ENCODE measurements at regions of chr4 and their contacts with region 1.

Region 1: GRCh38 chr4:89482248-89482647 is 174.6 kb upstream of the GPRIN3 start:
- DNase-seq: peak; percentile 88
- H3K4me3 ChIP-seq: no peak overlapping the region
- H3K27ac ChIP-seq: no peak overlapping the region
- H3K4me1 ChIP-seq: peaks cover 12% of the 10 kb centered on the region
- H3K27me3 ChIP-seq: no peaks in the 10 kb centered on the region
- CTCF ChIP-seq: peak; percentile 39 to 41
- POLR2A ChIP-seq: no peak

Region 2: DNA sequence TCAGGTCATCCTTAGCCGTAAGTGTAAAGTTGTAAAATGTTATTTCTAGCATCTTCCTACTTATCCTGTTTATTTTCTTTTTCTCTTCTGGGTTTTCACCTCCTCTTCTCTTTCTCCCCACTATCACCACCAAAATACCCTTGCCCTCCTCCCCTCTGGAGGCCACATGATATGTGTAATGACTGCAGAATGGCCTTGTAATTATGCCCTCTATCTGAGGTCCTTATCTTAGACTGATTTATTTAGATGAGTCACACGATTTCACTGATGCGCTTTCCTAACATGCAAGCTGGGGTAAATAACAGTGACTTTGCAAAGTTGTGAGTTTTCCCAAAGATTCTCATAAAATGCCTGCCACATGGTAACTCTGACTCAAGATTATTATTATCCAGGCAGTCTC is 57.1 kb after region 1 on chr4:
- CTCF ChIA-PET with region 1: interaction called, 11 read pairs
- POLR2A ChIA-PET with region 1: no interaction called
- dilution Hi-C with region 1: no loop called
- intact Hi-C with region 1: no loop called
- DNase-seq: peak; percentile 90
- H3K4me3 ChIP-seq: no peak overlapping the region
- H3K27ac ChIP-seq: peak overlapping the region; percentile 94
- H3K4me1 ChIP-seq: peaks cover 61% of the 10 kb centered on the region
- H3K27me3 ChIP-seq: no peaks in the 10 kb centered on the region
- CTCF ChIP-seq: no peak
- POLR2A ChIP-seq: no peak

Region 3: DNA sequence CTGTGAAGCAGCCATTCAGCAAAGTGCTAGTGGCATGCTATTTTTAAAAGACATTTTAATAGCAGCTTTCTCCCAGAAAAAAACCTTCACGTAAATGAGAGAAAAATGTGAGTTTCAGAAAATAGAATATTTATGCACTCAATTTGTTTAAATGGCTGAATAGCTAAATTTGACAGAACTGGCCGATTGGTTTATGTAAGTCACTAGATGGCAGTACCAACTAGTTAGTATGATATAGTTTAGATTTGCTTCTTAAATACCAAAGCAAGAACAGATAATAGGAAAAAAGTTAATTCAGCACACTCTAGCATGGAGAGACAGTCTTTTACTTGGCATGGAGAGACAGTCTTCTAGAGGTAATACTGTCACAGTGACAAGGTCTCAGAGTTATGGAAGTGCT is 104.6 kb after region 1 on chr4:
- CTCF ChIA-PET with region 1: interaction called, 8 read pairs
- POLR2A ChIA-PET with region 1: no interaction called
- dilution Hi-C with region 1: no loop called
- intact Hi-C with region 1: loop called (anchors 5 kb)
- DNase-seq: peak; percentile 45
- H3K4me3 ChIP-seq: no peak overlapping the region
- H3K27ac ChIP-seq: no peak overlapping the region
- H3K4me1 ChIP-seq: no peaks in the 10 kb centered on the region
- H3K27me3 ChIP-seq: no peaks in the 10 kb centered on the region
- CTCF ChIP-seq: no peak
- POLR2A ChIP-seq: no peak

Region 4: GRCh38 chr4:89657931-89658700 is 175.9 kb after region 1 on chr4:
- CTCF ChIA-PET with region 1: interaction called, 49 read pairs
- POLR2A ChIA-PET with region 1: no interaction called
- dilution Hi-C with region 1: no loop called
- intact Hi-C with region 1: loop called (anchors 1 kb)
- DNase-seq: peak; percentile 82
- H3K4me3 ChIP-seq: no peak overlapping the region
- H3K27ac ChIP-seq: no peak overlapping the region
- H3K4me1 ChIP-seq: peaks cover 9% of the 10 kb centered on the region
- H3K27me3 ChIP-seq: no peaks in the 10 kb centered on the region
- CTCF ChIP-seq: peak; percentile 29 to 34
- POLR2A ChIP-seq: no peak

Region 5: DNA sequence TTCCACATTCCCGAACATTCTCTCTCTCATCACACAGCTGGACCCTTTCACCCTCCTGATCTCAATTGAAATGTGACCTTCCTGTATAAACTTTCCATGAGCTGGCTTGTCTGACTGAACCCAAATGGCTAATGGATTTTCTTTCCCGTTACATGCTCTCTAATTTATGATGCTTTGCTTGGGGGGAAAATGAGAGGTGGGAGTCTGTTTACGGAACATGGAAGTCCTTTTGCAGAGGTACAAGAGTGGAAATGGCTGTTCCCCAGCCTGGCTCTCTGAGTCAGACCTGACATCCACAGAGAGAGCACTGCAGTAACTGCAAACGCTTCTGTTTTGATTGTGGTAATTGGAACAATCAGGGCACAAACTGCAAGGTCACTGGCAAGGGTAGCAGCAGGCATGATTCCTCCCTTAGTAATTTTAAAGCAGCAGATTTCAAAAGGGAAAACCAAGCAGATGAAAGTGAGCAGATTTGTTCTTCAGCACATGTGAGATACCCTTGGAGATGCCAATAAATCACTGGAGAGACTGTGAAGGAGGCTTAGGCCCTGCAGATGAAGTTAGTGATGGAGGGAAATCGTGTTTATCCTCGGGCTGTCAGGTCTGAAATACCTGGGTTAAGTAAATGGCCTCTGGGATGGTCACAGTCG is 270.8 kb after region 1 on chr4:
- CTCF ChIA-PET with region 1: interaction called, 16 read pairs
- POLR2A ChIA-PET with region 1: no interaction called
- dilution Hi-C with region 1: no loop called
- intact Hi-C with region 1: loop called (anchors 2 kb)
- DNase-seq: peak; percentile 91
- H3K4me3 ChIP-seq: peak overlapping the region in 1 of 3 experiments; percentile 54
- H3K27ac ChIP-seq: peak overlapping the region; percentile 99
- H3K4me1 ChIP-seq: peaks cover 27% of the 10 kb centered on the region
- H3K27me3 ChIP-seq: no peaks in the 10 kb centered on the region
- CTCF ChIP-seq: no peak
- POLR2A ChIP-seq: no peak

Region 6: GRCh38 chr4:89894649-89895550 is 412.7 kb after region 1 on chr4 and contains the start of gene MMRN1:
- CTCF ChIA-PET with region 1: interaction called, 44 read pairs
- POLR2A ChIA-PET with region 1: interaction called, 3 read pairs
- dilution Hi-C with region 1: no loop called
- intact Hi-C with region 1: no loop called
- DNase-seq: peak; percentile 95
- H3K4me3 ChIP-seq: peak within 1 kb of the TSS; percentile 83 to 100 (median 97)
- H3K27ac ChIP-seq: peak within 1 kb of the TSS; percentile 92
- H3K4me1 ChIP-seq: peaks cover 40% of the 10 kb centered on the region
- H3K27me3 ChIP-seq: no peaks in the 10 kb centered on the region
- CTCF ChIP-seq: no peak
- POLR2A ChIP-seq: peak; percentile 90
- total RNA-seq, gene MMRN1: 318 and 414 TPM in 2 replicates

Measured in endothelial cell of umbilical vein (primary cell).